K562 (cell line): ENCODE measurements at regions of chr2 and their contacts with region 1.

Region 1: GRCh38 chr2:124489686-124490085 is 464.6 kb downstream of the CNTNAP5 start:
- DNase-seq: no peak
- ATAC-seq: no peak
- H3K4me3 ChIP-seq: no peak overlapping the region
- H3K27ac ChIP-seq: no peak overlapping the region
- H3K4me1 ChIP-seq: no peaks in the 10 kb centered on the region
- H3K27me3 ChIP-seq: no peaks in the 10 kb centered on the region
- CTCF ChIP-seq: no peak
- EP300 ChIP-seq: no peak
- POLR2A ChIP-seq: no peak
- RAD21 ChIP-seq: no peak

Region 2: GRCh38 chr2:124347209-124347608 is 142.5 kb before region 1 on chr2:
- CTCF ChIA-PET with region 1: no interaction called
- POLR2A ChIA-PET with region 1: no interaction called
- in situ Hi-C with region 1: no loop called
- intact Hi-C with region 1: no loop called
- DNase-seq: no peak
- ATAC-seq: no peak
- H3K4me3 ChIP-seq: no peak overlapping the region
- H3K27ac ChIP-seq: no peak overlapping the region
- H3K4me1 ChIP-seq: no peaks in the 10 kb centered on the region
- H3K27me3 ChIP-seq: no peaks in the 10 kb centered on the region
- CTCF ChIP-seq: no peak
- EP300 ChIP-seq: no peak
- POLR2A ChIP-seq: no peak
- RAD21 ChIP-seq: no peak

Region 3: GRCh38 chr2:124836430-124836829 is 346.7 kb after region 1 on chr2:
- CTCF ChIA-PET with region 1: no interaction called
- POLR2A ChIA-PET with region 1: no interaction called
- in situ Hi-C with region 1: loop called (anchors 10 kb)
- intact Hi-C with region 1: no loop called
- DNase-seq: no peak
- ATAC-seq: no peak
- H3K4me3 ChIP-seq: no peak overlapping the region
- H3K27ac ChIP-seq: no peak overlapping the region
- H3K4me1 ChIP-seq: no peaks in the 10 kb centered on the region
- H3K27me3 ChIP-seq: no peaks in the 10 kb centered on the region
- CTCF ChIP-seq: no peak
- EP300 ChIP-seq: no peak
- POLR2A ChIP-seq: no peak
- RAD21 ChIP-seq: no peak